Ovary (tissue), 10 donors: ENCODE measurements at regions of chr6 and their contacts with region 1.

Region 1: DNA sequence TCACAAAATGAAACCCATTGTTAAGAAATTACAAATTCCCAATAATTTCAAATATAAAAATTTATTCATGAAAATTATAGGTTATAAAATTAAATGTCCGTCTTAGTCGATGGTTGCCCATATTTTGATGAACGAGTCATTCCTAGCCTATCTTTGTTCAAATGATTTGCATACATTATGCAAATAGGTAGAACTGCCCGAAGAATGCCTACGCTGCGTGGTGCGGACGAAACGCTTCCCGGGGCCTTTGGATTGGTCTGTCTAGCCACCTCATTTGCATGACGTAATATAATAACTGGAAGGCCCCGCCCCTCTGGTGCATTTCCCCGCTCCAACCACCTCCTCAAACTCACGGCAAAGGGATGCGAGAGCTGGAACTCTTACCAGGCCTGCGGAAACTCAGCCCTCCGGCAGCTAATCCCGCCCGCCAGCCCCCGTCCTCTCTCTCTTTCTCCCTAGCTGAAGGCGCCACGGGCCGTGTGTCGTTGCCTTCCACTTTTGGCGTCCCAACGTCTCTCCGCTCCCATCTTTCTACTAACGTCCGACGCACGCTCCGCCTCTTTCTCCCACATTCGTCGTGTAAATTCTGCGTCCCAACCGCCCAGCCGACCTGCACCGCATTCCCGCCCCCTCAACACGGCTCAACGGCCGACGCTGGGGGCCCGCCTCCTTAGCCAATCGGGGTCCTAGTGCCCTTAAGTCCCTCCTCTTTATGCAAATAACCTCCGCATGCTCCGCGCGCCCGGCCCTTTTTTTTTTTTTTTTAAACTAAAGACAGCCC is 520 bp upstream of the PRRC2A start:
- DNase-seq: peak; percentile 97 to 98 (median 98)
- H3K4me3 ChIP-seq: peak overlapping the region; percentile 82
- H3K27ac ChIP-seq: peak overlapping the region; percentile 82 to 98
- H3K4me1 ChIP-seq: peaks cover 1% of the 10 kb centered on the region
- H3K27me3 ChIP-seq: no peaks in the 10 kb centered on the region
- CTCF ChIP-seq: peak in 1 of 3 donors; percentile 55
- EP300 ChIP-seq: peak; percentile 10
- POLR2A ChIP-seq: peak; percentile 98

Region 2: DNA sequence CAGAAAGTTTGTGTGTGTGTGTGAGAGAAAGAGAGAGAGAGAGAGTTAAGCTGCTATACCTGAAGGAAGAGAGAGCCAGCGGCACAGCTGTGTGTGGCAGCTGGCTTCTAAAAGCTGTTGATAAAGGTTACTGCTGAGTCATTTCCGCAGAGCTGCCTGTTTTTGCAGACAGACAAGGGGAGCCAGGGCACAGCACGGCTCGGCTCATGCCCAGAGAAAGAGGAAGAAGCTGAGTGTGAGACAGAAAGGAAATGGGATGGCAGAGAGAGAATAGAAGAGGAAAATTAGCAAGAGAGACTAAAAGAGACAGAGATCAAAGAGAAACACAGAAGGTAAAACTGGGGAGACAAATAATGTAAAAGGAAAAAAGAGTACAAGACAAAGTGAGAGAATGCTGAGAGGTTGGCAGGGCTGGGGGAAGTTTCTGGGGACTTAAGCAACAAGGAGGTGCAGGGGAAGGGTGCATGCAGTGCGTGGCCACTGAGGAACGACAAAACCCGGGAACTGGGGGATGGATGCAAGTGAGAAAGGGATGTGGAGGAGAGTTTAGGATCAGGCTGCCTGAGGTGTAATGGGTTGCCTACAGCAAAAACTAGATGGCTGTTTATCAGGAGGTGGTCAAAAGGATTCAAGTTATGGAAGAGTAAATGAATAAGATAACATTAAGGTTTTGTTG is 1655.0 kb before region 1 on chr6:
- intact Hi-C with region 1: loop called in 1 of 4 experiments (anchors 5 kb)
- DNase-seq: peak; percentile 58 to 71 (median 62)
- H3K4me3 ChIP-seq: peak overlapping the region; percentile 23
- H3K27ac ChIP-seq: peak overlapping the region in 1 of 2 donors; percentile 77
- H3K4me1 ChIP-seq: no peaks in the 10 kb centered on the region
- H3K27me3 ChIP-seq: no peaks in the 10 kb centered on the region
- CTCF ChIP-seq: no peak
- EP300 ChIP-seq: no peak
- POLR2A ChIP-seq: no peak

Region 3: DNA sequence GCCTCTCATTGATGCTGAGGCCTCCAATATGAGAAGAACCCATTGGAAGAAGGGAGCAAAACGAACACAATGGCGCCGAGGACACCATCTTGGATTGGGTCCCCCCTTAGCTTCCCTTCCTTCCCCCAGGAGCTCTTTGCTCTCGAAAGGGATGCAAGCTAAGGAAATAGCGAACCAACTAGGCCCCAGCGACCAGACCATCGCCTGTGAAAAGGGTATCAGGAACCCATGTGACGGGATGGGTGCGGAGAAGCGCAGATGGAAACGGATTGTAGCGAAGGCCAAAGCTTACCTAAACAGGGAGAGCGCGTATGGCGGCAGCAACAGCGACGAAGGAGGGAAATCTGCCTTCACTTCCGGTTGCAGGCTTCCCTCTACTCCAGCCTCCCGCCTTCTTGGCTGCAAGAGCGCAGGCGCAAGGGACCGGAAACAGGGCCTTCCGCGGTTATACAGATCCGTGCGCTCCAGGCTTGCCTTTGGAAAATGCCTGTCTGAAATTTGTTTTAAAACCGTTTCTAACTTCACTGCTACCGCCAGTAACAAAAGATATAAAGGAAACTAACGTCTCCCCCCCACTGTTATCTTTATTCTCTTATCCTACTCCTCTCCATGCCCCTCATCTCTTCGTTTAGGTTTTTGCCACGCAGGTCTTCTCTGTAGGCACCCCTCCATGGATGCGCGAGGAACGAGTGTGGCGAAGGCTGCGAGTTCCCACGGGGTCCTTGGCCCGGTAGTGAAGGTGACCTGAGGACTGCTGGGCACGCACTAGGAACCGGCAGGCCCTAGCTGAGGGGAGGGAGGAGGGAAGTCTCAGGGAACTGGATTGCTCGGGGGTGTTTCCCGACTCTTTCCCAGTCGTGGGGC is 78.1 kb before region 1 on chr6 and contains the start of gene DDX39B:
- intact Hi-C with region 1: loop called in 1 of 4 experiments (anchors 10 kb)
- DNase-seq: peak; percentile 93 to 97 (median 96)
- H3K4me3 ChIP-seq: peak within 1 kb of the TSS; percentile 63
- H3K27ac ChIP-seq: peak within 1 kb of the TSS; percentile 80 to 97
- H3K4me1 ChIP-seq: peaks cover 11% of the 10 kb centered on the region
- H3K27me3 ChIP-seq: no peaks in the 10 kb centered on the region
- CTCF ChIP-seq: peak in 1 of 3 donors; percentile 22
- EP300 ChIP-seq: no peak
- POLR2A ChIP-seq: peak; percentile 78
- total RNA-seq, gene DDX39B: 212 to 404 (median 362) TPM

Region 4: GRCh38 chr6:31652925-31653718 is 33.1 kb after region 1 on chr6:
- intact Hi-C with region 1: loop called in 1 of 4 experiments (anchors 2 kb)
- DNase-seq: peak in 4 of 5 donors; percentile 87 to 92 (median 89)
- H3K4me3 ChIP-seq: peak overlapping the region; percentile 95
- H3K27ac ChIP-seq: peak overlapping the region; percentile 99 to 100
- H3K4me1 ChIP-seq: peaks cover 7% of the 10 kb centered on the region
- H3K27me3 ChIP-seq: no peaks in the 10 kb centered on the region
- CTCF ChIP-seq: peak in 1 of 3 donors; percentile 6
- EP300 ChIP-seq: no peak
- POLR2A ChIP-seq: peak; percentile 3

Region 5: DNA sequence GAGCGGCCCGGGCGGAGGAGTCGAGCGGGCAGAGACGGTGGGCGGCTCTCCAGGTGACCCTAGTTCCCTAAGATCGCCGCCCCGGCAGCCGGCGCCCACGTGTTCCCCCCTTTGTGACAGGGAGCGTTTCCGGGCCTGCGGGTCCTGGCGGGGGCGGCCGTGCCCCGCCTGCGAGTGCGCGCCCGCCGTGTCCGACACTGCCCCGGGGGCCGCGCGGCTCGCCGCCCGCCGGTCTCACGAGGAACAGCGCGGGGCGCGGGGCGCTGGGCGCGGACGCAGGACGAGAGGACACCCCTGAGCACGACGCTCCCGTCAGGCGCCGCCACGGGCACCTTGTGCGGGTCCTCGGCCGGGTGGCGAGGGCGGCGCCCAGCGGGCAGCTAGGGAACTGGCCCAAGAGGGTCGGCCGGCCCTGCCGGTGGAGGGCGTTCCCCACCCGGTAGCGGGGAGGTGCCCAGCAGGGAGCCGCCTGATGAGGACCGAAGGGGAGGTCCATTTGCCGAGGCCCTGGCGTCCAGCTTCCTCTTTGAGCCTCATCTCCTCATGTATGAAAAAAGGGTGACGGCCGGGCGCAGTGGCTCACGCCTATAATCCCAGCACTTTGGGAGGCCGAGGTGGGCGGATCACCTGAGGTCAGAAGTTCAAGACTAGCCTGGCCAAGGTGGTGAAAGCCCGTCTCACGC is 175.8 kb after region 1 on chr6 and contains the start of gene VARS1:
- intact Hi-C with region 1: no loop called
- DNase-seq: peak; percentile 88 to 93 (median 91)
- H3K4me3 ChIP-seq: peak within 1 kb of the TSS; percentile 67
- H3K27ac ChIP-seq: peak within 1 kb of the TSS; percentile 93 to 96
- H3K4me1 ChIP-seq: peaks cover 6% of the 10 kb centered on the region
- H3K27me3 ChIP-seq: no peaks in the 10 kb centered on the region
- CTCF ChIP-seq: peak; percentile 77 to 99 (median 99)
- EP300 ChIP-seq: no peak
- POLR2A ChIP-seq: peak; percentile 70
- total RNA-seq, gene VARS1: 16.0 to 73.6 (median 44.1) TPM

Region 6: DNA sequence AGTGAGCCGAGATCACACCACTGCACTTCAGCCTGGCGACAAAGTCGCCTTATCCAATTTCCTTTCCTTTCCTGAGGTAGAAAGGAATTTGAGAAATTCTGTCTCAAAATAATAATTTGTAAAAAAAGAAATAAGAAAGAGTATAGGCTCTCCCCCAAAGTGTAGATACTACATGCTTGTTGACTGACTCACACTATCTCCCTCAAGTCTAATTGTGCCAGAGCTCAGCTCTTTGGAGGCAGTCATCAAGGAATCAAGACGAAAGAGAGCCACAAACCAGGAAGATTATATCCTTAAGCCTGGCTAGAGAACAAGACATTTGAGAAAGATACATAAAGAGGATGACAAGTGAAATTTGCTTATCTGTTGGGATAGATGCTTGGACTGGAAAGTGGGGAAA is 513.8 kb after region 1 on chr6:
- intact Hi-C with region 1: no loop called
- DNase-seq: no peak
- H3K4me3 ChIP-seq: no peak overlapping the region
- H3K27ac ChIP-seq: no peak overlapping the region
- H3K4me1 ChIP-seq: peaks cover 10% of the 10 kb centered on the region
- H3K27me3 ChIP-seq: no peaks in the 10 kb centered on the region
- CTCF ChIP-seq: no peak
- EP300 ChIP-seq: no peak
- POLR2A ChIP-seq: no peak